Endothelial cell of umbilical vein (primary cell): ENCODE measurements at regions of chr15 and their contacts with region 1.

Region 1: DNA sequence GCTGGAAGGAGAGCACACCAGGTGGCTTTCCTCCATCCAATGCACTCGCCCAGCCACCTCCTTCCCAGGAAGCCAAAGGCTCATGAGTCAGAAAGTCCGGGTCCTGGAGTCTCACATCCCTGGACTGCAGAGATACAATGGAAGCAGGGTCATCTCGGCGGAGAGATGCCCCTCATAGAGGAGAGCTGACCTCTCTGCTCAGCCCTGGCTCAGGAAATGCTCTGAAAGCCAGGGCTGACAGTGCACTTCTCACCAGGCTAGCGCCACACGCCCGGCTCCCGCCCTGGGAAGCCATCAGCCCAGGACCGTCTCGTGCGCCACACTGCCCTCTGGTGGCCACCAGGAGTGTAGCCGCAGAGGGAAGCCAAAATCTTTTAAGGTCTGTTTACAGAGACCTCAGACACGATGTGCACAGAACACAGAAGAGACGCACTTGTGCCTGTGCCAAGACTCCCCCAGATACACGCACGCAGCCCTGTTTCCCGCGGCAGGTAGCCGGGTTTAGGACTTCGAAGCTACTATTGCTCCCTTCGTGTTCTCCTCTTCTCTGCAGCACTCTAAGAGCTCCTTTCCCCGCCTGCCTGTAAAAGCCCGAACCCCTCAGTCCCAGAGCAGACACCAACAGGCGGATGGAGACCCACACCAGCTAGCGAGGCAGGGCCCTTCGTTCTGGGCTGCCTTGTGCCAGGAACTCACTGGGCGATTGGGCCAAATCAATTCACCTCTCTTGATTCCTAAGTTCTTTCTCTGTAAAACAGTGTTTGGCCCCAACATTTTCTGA is 9.7 kb downstream of the NTRK3 start:
- DNase-seq: peak; percentile 50
- H3K4me3 ChIP-seq: no peak overlapping the region
- H3K27ac ChIP-seq: no peak overlapping the region
- H3K4me1 ChIP-seq: no peaks in the 10 kb centered on the region
- H3K27me3 ChIP-seq: no peaks in the 10 kb centered on the region
- CTCF ChIP-seq: peak; percentile 89 to 92
- POLR2A ChIP-seq: no peak

Region 2: GRCh38 chr15:86915811-86916331 is 1331.0 kb before region 1 on chr15:
- CTCF ChIA-PET with region 1: no interaction called
- POLR2A ChIA-PET with region 1: no interaction called
- dilution Hi-C with region 1: no loop called
- intact Hi-C with region 1: loop called (anchors 5 kb)
- DNase-seq: no peak
- H3K4me3 ChIP-seq: no peak overlapping the region
- H3K27ac ChIP-seq: no peak overlapping the region
- H3K4me1 ChIP-seq: no peaks in the 10 kb centered on the region
- H3K27me3 ChIP-seq: no peaks in the 10 kb centered on the region
- CTCF ChIP-seq: no peak
- POLR2A ChIP-seq: no peak

Region 3: DNA sequence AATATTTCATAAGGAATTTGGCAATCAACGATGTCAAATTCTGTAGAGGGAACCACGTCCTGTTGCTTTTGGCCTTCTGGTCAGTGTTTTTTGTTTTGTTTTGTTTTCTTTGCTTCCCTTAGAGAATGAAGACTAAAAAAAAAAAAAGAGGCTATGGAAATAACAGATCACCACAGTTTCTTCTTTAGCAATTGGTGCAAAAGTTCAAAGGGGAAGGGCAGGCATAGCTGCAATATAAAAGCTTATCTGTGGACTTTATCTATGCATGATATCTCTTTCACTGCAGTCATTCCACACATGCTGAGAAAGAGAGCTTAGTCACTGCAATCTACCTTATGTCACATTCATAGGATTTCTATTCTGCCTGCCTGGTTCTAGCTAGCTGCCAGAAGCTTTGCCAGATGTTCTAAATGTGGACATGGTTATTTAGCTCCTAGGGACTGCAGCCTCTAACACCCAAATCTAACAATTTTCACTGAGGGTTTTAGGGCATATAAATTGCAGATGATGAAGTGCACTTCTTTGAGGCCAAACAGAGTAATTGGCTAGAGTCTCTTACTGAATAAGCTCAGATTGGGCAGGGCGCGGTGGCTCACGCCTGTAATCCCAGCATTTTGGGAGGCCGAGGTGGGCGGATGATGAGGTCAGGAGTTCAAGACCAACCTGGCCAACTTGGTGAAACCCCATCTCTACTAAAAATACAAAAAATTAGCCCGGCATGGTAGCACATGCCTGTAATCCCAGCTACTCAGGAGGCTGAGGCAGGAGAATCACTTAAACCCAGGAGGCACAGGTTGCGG is 627.5 kb before region 1 on chr15:
- CTCF ChIA-PET with region 1: interaction called, 3 read pairs
- POLR2A ChIA-PET with region 1: no interaction called
- dilution Hi-C with region 1: no loop called
- intact Hi-C with region 1: loop called (anchors 10 kb)
- DNase-seq: peak; percentile 73
- H3K4me3 ChIP-seq: no peak overlapping the region
- H3K27ac ChIP-seq: peak overlapping the region; percentile 63
- H3K4me1 ChIP-seq: peaks cover 11% of the 10 kb centered on the region
- H3K27me3 ChIP-seq: no peaks in the 10 kb centered on the region
- CTCF ChIP-seq: no peak
- POLR2A ChIP-seq: no peak

Region 4: GRCh38 chr15:88274553-88275460 is 28.0 kb after region 1 on chr15:
- CTCF ChIA-PET with region 1: interaction called, 40 read pairs
- POLR2A ChIA-PET with region 1: no interaction called
- dilution Hi-C with region 1: no loop called
- intact Hi-C with region 1: no loop called
- DNase-seq: peak; percentile 46
- H3K4me3 ChIP-seq: no peak overlapping the region
- H3K27ac ChIP-seq: no peak overlapping the region
- H3K4me1 ChIP-seq: no peaks in the 10 kb centered on the region
- H3K27me3 ChIP-seq: no peaks in the 10 kb centered on the region
- CTCF ChIP-seq: peak; percentile 77 to 92
- POLR2A ChIP-seq: no peak

Region 5: DNA sequence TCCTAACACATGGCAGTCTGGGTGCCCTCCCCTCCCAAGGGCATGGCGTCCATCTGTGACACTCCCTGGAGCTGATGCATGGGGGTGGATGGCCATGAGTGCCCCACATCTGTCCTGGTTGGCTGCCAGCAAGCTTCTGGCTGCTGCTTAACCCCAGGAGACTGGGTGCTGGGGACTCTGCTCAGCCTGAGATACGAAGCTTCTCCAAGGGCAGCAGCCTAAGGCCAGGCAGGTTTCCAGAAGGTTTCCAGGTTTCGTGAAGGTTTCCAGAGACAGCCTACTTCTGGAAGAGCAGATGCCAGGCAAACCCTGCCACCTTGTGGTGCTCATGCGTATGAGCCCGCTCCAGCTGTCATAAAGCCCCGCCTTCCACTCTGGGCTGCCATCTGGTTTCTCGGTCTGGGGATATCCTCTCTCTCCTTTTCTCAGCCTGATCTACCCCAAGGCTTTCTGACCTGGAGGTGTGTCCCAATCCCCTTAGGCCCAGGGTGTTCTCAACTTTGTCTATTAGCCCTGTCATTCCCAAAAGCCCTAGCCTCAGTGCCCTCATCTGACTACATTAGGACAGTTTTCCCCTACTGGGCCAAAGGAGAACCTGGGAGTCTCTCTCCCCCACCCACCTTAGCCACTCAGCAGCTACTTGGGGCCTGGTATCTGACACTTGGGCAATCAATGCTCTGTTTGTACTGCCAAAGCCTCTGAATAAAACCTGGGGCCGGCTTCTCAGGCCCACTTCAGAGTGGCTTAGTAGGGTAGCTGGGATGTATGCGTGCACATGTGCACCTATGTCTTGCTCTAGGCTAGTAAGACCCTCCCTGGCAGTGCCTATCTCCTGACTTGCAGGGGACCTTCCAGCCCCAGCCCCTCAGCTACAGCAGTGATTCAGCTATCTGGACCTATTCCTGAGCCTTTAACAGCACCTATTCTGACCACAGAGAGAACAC is 208.3 kb after region 1 on chr15:
- CTCF ChIA-PET with region 1: interaction called, 5 read pairs
- POLR2A ChIA-PET with region 1: no interaction called
- dilution Hi-C with region 1: no loop called
- intact Hi-C with region 1: loop called (anchors 1 kb)
- DNase-seq: peak; percentile 60
- H3K4me3 ChIP-seq: no peak overlapping the region
- H3K27ac ChIP-seq: no peak overlapping the region
- H3K4me1 ChIP-seq: peaks cover 15% of the 10 kb centered on the region
- H3K27me3 ChIP-seq: no peaks in the 10 kb centered on the region
- CTCF ChIP-seq: peak; percentile 77 to 84
- POLR2A ChIP-seq: no peak